AG04450 (cell line): ENCODE measurements at regions of chr17 and their contacts with region 1.

Region 1: GRCh38 chr17:9360677-9361081 is 214.9 kb downstream of the STX8 start:
- DNase-seq: no peak
- H3K4me3 ChIP-seq: peak overlapping the region; percentile 33
- H3K27ac ChIP-seq: no peak overlapping the region
- H3K27me3 ChIP-seq: no peaks in the 10 kb centered on the region
- CTCF ChIP-seq: no peak

Region 2: DNA sequence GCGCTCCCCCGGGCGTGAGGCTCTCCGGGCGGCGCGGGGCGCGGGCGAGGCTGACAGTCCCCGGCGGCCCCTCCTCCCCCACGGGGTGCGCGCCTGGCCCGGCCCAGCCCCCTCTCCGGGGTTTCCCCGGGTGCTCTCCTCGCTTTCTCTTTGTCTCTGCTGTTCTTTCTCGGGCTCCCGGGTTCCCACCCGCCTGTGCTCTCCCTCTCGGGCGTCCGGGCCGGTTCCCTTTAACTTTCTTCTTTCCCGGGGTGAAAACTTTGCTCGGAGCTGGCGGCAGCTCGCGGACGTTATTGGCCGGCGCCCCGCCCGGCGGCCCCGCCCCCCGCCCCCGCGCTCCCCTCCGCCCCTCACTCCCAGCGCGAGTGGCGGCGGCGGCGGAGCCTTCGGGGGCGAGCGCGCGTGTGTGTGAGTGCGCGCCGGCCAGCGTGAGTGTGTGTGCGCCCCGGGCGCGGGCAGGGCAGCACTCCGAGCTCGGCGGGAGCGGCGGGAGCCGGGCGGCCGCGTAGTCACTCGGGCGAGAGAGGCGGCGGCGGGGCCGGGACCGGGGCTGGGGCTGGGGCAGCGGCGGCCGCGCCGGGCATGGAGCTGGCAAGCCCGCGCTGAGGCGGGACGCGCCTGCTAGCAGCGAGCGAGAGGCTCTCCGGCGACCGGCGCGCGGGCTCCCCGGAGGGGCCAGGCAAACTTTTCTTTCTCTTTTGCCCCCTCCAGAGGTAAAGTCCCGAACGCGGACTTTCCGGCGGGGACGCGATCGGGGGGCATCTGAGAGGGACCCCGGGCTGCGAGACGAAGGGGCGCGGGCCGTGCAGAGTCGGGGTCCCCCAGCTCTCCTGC is 339.3 kb before region 1 on chr17 and contains the start of gene NTN1:
- CTCF ChIA-PET with region 1: interaction called, 10 read pairs
- POLR2A ChIA-PET with region 1: no interaction called
- DNase-seq: no peak
- H3K4me3 ChIP-seq: peak within 1 kb of the TSS; percentile 48
- H3K27ac ChIP-seq: no peak within 1 kb of the TSS
- H3K27me3 ChIP-seq: peaks cover 37% of the 10 kb centered on the region
- CTCF ChIP-seq: no peak
- polyA plus RNA-seq, gene NTN1: 0.05 and 0.16 TPM in 2 replicates